ENCODE measurements at regions of chr6 and their contacts with region 1.

Region 1: GRCh38 chr6:165884813-165885765 is 222.0 kb upstream of the PDE10A start:
- DNase-seq: peak; percentile 53 to 88
- ATAC-seq: peak; percentile 87

Region 2: GRCh38 chr6:165937564-165938358 is 52.7 kb after region 1 on chr6:
- intact Hi-C with region 1: no loop called
- DNase-seq: no peak
- ATAC-seq: no peak

Region 3: DNA sequence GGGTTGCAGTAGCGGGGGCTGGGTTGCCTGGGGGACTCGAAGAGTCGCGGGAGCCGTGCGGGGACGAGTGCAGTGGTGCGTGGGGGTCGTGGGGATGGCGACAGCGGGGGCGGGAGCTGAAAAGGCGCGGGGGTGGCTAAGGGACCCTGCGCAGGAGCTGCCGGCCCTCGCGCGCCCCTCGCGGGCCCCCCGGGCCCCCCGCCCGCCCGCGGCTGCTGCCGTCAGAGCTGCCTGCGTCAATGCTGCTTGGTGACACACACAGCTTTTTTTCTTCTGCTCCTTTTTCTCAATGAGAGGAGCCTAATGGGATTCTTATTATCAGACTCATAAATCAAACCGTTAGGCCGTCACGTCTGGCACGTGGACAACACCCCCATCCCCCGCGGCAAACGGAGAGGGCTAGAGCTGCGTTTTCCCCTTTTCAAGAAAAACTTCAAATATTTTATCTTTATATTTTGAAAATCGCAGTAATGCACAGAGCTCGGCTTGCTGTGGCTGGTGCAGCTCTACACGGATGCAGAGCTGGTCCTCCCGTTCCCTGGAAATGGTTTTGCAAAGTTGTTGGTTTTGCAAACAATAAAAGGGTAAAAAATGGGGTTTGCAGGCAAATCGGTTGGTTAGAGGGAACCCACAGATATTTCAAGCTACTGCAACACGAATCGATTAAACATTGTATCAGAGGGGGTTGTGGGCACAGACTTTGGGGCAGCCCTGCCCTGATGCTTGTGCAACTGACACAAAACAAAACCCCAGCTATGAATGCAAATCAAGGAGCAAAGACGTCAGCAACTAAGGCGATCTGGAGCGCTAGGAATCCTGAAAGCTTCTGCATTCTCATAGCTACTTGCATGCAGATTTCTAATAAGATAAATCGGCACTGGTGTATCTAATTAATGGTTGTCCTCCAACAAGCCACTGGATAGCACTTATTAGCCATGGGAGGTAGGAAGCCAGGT is 121.1 kb after region 1 on chr6:
- intact Hi-C with region 1: loop called in 1 of 2 experiments (anchors 10 kb)
- DNase-seq: peak in 1 of 2 donors; percentile 26
- ATAC-seq: peak; percentile 33

Region 4: GRCh38 chr6:166106076-166106686 is 221.1 kb after region 1 on chr6:
- intact Hi-C with region 1: loop called (anchors 2 to 5 kb)
- DNase-seq: peak; percentile 43 to 81
- ATAC-seq: peak; percentile 71